Heart left ventricle (tissue), 16 donors: ENCODE measurements at regions of chr20 and their contacts with region 1.

Region 1: DNA sequence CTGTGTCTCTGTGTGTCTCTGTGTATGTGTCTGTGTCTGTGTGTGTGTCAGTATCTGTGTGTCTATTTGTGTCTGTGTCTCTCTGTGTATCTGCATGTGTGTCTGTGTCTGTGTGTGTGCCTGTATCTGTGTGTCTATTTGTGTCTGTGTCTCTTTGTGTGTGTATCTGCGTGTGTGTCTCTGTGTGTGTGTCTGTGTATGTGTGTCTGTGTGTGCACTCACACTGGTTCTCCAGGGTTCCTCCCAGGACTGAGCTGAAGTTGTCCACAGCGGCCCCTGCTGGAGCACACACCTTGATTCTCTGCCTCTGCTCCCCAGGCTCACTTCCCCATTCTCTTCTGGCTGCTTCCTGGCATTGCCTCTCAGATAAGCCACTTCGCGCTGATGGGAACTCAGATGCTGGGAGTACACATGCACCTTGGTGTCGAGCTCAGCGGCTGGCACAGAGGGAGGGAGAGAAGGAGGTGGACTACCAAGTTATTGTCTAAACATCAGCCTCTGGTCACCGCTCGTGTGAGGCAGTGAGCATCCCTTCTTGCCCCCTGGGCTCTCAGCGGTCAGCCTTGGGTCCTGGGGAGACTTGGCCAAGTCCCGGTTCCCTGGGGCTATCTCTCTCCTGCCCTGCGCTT is 104.9 kb upstream of the NXT1 start:
- DNase-seq: peak; percentile 67 to 80 (median 71)
- ATAC-seq: peak; percentile 40 to 83 (median 79)
- H3K4me3 ChIP-seq: no peak overlapping the region
- H3K27ac ChIP-seq: peak overlapping the region in 10 of 12 donors; percentile 23 to 75 (median 66)
- H3K4me1 ChIP-seq: peaks cover 0 to 37% (median 18%) of the 10 kb centered on the region in 12 donors
- H3K27me3 ChIP-seq: no peaks in the 10 kb centered on the region
- CTCF ChIP-seq: peak; percentile 42 to 69 (median 48)
- POLR2A ChIP-seq: no peak

Region 2: GRCh38 chr20:23072892-23073586 is 172.6 kb before region 1 on chr20:
- intact Hi-C with region 1: loop called in 1 of 10 experiments (anchors 5 kb)
- DNase-seq: no peak
- ATAC-seq: peak in 2 of 4 donors; percentile 31 to 44
- H3K4me3 ChIP-seq: no peak overlapping the region
- H3K27ac ChIP-seq: no peak overlapping the region
- H3K4me1 ChIP-seq: peaks cover 0 to 6% (median 0%) of the 10 kb centered on the region in 12 donors
- H3K27me3 ChIP-seq: no peaks in the 10 kb centered on the region
- CTCF ChIP-seq: no peak
- POLR2A ChIP-seq: no peak

Region 3: GRCh38 chr20:23287354-23288190 is 41.9 kb after region 1 on chr20:
- intact Hi-C with region 1: loop called in 1 of 10 experiments (anchors 5 kb)
- DNase-seq: no peak
- ATAC-seq: no peak
- H3K4me3 ChIP-seq: no peak overlapping the region
- H3K27ac ChIP-seq: no peak overlapping the region
- H3K4me1 ChIP-seq: peaks cover 0 to 14% (median 4%) of the 10 kb centered on the region in 12 donors
- H3K27me3 ChIP-seq: no peaks in the 10 kb centered on the region
- CTCF ChIP-seq: no peak
- POLR2A ChIP-seq: no peak

Region 4: GRCh38 chr20:23320317-23320716 is 74.7 kb after region 1 on chr20:
- intact Hi-C with region 1: no loop called
- DNase-seq: no peak
- ATAC-seq: no peak
- H3K4me3 ChIP-seq: no peak overlapping the region
- H3K27ac ChIP-seq: no peak overlapping the region
- H3K4me1 ChIP-seq: peaks cover 0 to 9% (median 0%) of the 10 kb centered on the region in 12 donors
- H3K27me3 ChIP-seq: no peaks in the 10 kb centered on the region
- CTCF ChIP-seq: peak in 7 of 12 donors; percentile 15 to 42 (median 30)
- POLR2A ChIP-seq: no peak

Region 5: GRCh38 chr20:23340524-23340923 is 94.9 kb after region 1 on chr20:
- intact Hi-C with region 1: loop called in 8 of 10 experiments (anchors 5 to 10 kb)
- DNase-seq: peak; percentile 60 to 74 (median 72)
- ATAC-seq: peak in 3 of 4 donors; percentile 84 to 89 (median 87)
- H3K4me3 ChIP-seq: no peak overlapping the region
- H3K27ac ChIP-seq: no peak overlapping the region
- H3K4me1 ChIP-seq: peaks cover 0 to 5% (median 1%) of the 10 kb centered on the region in 12 donors
- H3K27me3 ChIP-seq: no peaks in the 10 kb centered on the region
- CTCF ChIP-seq: peak; percentile 52 to 86 (median 77)
- POLR2A ChIP-seq: no peak

Region 6: GRCh38 chr20:23613676-23614075 is 368.0 kb after region 1 on chr20:
- intact Hi-C with region 1: no loop called
- DNase-seq: peak in 1 of 5 donors; percentile 47
- ATAC-seq: peak in 2 of 4 donors; percentile 52 to 64
- H3K4me3 ChIP-seq: no peak overlapping the region
- H3K27ac ChIP-seq: peak overlapping the region in 5 of 12 donors; percentile 9 to 57 (median 20)
- H3K4me1 ChIP-seq: peaks cover 0 to 26% (median 1%) of the 10 kb centered on the region in 12 donors
- H3K27me3 ChIP-seq: no peaks in the 10 kb centered on the region
- CTCF ChIP-seq: no peak
- POLR2A ChIP-seq: no peak